ENCODE measurements at regions of chr10 and their contacts with region 1.

Region 1: DNA sequence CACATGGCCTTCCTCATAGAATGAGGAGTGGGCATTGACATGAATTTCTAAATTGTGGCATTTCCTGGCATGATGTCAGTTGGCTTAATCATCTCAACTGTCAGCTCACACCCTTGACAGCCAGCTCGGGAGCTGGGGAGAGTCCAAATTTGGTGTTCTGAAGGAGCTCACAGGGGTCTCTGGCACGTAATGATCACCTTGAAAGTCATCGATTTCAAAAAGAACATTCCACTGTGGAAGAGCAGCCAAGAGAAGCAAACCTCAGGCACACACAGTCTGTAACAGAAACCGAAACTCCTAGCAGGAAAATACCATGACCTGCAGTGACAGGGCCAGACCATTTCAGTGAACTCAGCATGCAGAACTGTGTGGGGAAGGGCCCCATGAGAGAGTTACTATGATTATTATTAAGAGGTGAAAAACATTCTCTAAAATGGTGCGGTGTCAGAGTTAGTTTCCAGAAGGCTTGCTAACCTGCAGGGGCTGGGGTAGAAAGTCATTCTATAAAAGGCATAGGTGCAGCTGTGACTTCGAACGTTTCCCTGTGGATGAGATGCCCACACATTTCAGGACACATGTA is 26.4 kb upstream of the KLF6 start:
- DNase-seq: peak; percentile 55
- H3K4me3 Mint-ChIP-seq: peak overlapping the region; percentile 43
- H3K27ac Mint-ChIP-seq: peak overlapping the region; percentile 85
- H3K4me1 Mint-ChIP-seq: peaks cover 74% of the 10 kb centered on the region
- H3K27me3 Mint-ChIP-seq: no peaks in the 10 kb centered on the region
- CTCF ChIP-seq: no peak

Region 2: DNA sequence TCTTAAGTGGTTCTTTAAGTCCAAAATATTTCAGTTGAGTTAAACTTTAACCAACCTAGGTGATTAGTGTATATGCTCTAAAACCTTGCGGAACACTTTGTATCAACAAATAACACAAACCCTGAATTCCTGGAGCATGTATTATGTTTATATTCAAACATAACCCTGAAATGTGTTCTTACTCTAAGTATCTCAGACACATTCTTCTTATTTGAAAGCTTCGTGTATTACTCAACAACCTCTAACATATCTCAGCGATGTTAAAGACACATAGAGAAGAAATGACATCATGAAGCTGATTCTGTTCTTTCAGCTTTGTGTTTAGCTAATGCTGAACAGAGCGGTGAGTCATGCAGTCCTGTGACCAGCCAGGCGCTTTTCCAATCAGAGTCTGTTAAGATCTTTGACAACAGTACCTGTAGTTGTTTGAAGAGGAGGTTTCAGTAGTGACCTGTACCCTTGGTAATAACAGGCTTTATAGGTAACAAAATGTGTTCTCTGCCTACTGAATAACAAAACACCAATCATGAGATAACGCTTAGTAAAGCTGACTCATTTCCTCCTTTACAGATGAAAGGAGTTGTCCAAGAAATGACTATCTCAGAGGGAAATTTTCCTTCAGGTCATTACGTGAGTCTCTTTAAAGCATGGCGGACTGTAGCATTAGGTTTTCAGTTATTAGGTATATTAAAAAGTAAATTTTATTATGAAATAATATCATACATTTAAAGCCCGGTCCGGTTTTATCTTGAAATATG is 40.9 kb after region 1 on chr10:
- CTCF ChIA-PET with region 1: interaction called, 19 read pairs
- intact Hi-C with region 1: loop called (anchors 1 kb)
- DNase-seq: peak; percentile 80
- H3K4me3 Mint-ChIP-seq: peak overlapping the region; percentile 55
- H3K27ac Mint-ChIP-seq: peak overlapping the region; percentile 97
- H3K4me1 Mint-ChIP-seq: peaks cover 46% of the 10 kb centered on the region
- H3K27me3 Mint-ChIP-seq: no peaks in the 10 kb centered on the region
- CTCF ChIP-seq: no peak